HepG2 (cell line): ENCODE measurements at regions of chr16 and their contacts with region 1.

Region 1: GRCh38 chr16:78770353-78771091 is 671.1 kb downstream of the WWOX start:
- DNase-seq: peak; percentile 67
- ATAC-seq: peak; percentile 94
- H3K4me3 ChIP-seq: peak overlapping the region in 1 of 3 experiments; percentile 40; a peak in 1 of 6 replicates
- H3K27ac ChIP-seq: no peak overlapping the region
- H3K4me1 ChIP-seq: peaks cover 30% of the 10 kb centered on the region
- H3K27me3 ChIP-seq: no peaks in the 10 kb centered on the region
- CTCF ChIP-seq: peak; percentile 96
- EP300 ChIP-seq: no peak
- POLR2A ChIP-seq: no peak
- RAD21 ChIP-seq: peak; percentile 89

Region 2: DNA sequence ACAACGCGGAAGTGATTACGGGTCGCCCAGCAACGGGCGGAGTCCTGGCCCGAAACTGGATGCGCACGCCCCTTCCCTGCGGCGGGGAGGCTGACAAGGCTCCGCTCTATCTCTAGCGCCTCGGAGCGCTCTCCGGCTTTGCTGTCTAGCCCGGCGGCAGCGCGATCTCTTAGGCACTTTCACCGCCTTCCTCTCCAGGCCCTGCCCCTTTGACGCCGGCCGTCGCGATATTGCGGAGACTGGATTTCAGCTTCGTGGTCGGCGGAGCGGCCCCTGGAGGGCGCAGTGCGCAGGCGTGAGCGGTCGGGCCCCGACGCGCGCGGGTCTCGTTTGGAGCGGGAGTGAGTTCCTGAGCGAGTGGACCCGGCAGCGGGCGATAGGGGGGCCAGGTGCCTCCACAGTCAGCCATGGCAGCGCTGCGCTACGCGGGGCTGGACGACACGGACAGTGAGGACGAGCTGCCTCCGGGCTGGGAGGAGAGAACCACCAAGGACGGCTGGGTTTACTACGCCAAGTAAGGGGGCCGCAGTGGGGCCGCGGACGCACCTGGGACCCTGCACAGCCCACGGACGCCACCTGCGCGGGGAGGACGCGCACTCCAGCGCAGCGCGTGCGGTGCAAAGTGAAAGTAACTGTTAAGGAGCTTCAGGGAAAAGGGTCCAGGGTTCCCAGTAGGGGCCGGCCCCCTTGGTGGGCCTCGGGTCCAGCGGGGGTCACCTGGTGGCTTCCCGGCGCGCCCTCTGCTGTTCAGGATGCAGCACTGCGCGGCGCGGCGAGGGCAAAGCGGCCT is 671.0 kb before region 1 on chr16 and contains the start of gene WWOX:
- CTCF ChIA-PET with region 1: no interaction called
- POLR2A ChIA-PET with region 1: no interaction called
- in situ Hi-C with region 1: loop called (anchors 25 kb)
- intact Hi-C with region 1: no loop called
- DNase-seq: peak; percentile 96
- ATAC-seq: peak; percentile 95
- H3K4me3 ChIP-seq: peak within 1 kb of the TSS; percentile 70 to 93 (median 92)
- H3K27ac ChIP-seq: peak within 1 kb of the TSS; percentile 90
- H3K4me1 ChIP-seq: peaks cover 54% of the 10 kb centered on the region
- H3K27me3 ChIP-seq: no peaks in the 10 kb centered on the region; a peak in 1 of 5 replicates
- CTCF ChIP-seq: peak; percentile 87
- EP300 ChIP-seq: no peak; a peak in 2 of 4 replicates
- POLR2A ChIP-seq: peak; percentile 86 to 93
- RAD21 ChIP-seq: peak; percentile 78
- total RNA-seq, gene WWOX: 37.4 and 38.4 TPM in 2 replicates

Region 3: DNA sequence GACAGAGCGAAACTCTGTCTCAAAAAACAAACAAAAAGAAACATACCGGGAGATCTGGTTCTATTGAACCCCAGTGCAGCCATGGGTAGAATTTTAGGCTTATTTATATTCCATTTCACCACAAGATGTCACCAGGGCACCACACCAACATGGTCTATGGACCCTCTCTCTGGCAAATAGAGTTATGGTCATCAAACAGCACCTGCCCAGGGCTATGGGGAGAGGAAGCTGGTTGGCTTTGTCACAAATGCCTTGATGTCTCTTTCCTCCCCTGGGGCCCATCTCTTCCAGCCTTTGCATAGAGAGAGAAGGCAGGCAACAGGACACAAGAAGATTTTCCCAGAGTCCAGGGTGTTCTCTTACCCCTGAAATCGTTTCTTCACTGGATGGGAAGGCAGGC is 542.7 kb before region 1 on chr16:
- CTCF ChIA-PET with region 1: interaction called, 4 read pairs
- POLR2A ChIA-PET with region 1: no interaction called
- in situ Hi-C with region 1: loop called (anchors 10 kb)
- intact Hi-C with region 1: loop called (anchors 1 kb)
- DNase-seq: peak; percentile 74
- ATAC-seq: peak; percentile 98
- H3K4me3 ChIP-seq: no peak overlapping the region
- H3K27ac ChIP-seq: no peak overlapping the region
- H3K4me1 ChIP-seq: peaks cover 30% of the 10 kb centered on the region
- H3K27me3 ChIP-seq: no peaks in the 10 kb centered on the region
- CTCF ChIP-seq: peak; percentile 87
- EP300 ChIP-seq: no peak
- POLR2A ChIP-seq: no peak
- RAD21 ChIP-seq: peak; percentile 86

Region 4: DNA sequence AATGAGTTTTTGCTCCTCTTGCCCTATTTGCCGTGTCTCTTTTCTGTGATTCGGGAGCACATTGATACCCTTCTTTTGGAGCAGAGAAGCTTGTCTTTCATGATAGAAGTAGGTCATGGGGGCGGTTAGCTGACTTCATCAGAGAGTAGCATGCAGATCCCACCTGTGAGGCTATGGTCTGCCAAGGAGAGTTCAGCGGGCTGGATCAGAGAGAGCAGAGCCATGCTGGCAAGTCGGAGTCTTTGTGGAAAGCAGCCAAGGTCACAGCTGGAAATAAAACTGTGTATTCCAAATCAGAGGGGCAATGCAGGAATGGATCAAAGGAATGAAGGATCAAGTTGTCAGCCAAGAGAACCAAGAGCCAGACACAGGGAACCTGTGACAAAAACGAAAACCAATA is 75.1 kb before region 1 on chr16:
- CTCF ChIA-PET with region 1: no interaction called
- POLR2A ChIA-PET with region 1: no interaction called
- in situ Hi-C with region 1: no loop called
- intact Hi-C with region 1: no loop called
- DNase-seq: no peak
- ATAC-seq: no peak
- H3K4me3 ChIP-seq: no peak overlapping the region
- H3K27ac ChIP-seq: no peak overlapping the region
- H3K4me1 ChIP-seq: no peaks in the 10 kb centered on the region
- H3K27me3 ChIP-seq: no peaks in the 10 kb centered on the region
- CTCF ChIP-seq: no peak
- EP300 ChIP-seq: no peak
- POLR2A ChIP-seq: no peak
- RAD21 ChIP-seq: no peak

Region 5: GRCh38 chr16:78729687-78730086 is 40.8 kb before region 1 on chr16:
- CTCF ChIA-PET with region 1: no interaction called
- POLR2A ChIA-PET with region 1: no interaction called
- in situ Hi-C with region 1: loop called (anchors 5 kb)
- intact Hi-C with region 1: no loop called
- DNase-seq: peak; percentile 82
- ATAC-seq: peak; percentile 64
- H3K4me3 ChIP-seq: no peak overlapping the region
- H3K27ac ChIP-seq: peak overlapping the region; percentile 58
- H3K4me1 ChIP-seq: peaks cover 82% of the 10 kb centered on the region
- H3K27me3 ChIP-seq: no peaks in the 10 kb centered on the region
- CTCF ChIP-seq: no peak
- EP300 ChIP-seq: peak; percentile 70 to 82; a peak in 3 of 4 replicates
- POLR2A ChIP-seq: no peak
- RAD21 ChIP-seq: no peak